ENCODE measurements at regions of chr9 and their contacts with region 1.

Region 1: DNA sequence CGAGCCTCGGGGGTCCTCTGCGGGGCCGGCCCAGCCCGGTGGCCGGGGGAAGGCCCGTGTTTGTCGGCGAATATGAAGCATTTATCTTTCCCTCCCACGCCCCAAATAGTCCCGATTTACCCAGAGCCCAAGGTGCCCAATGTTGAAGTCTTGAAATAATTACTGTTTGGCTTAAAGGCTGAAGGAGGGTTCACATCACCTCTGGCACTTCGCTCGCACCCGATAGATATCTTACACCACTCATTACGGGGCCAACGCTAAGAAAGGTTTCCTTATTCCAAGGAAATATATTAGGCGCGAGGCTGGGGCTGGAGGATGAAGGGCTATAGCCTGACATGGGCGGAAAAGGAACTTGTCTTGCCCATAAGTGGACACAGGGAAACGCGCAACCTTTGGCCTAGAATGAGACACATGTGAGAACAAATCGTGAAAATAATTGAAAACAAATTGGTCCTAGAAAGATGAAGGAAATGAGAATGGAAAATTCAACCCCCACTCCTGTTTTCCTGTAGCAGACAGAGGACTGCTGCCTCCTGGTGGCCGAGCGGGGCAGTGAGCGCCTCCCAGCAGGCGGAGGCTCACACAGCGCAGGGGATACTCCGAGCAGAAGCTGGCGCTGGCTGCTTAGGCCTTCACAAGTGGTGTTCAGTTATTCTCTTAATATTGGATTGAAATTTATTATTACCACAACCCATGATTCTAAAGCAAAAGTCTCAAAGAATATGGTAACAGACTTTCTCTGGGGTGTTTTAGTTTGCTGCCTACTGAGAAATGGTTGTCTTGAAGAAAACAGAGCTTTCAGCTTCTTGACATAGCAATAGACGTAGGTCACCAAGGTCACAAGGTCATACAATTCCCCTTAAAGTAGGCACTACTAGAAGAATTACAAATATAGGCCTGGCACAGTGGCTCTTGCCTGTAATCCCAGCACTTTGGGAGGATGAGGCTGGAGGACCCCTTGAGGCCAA is 7.9 kb downstream of the CCL21 start:
- DNase-seq: peak; percentile 70 to 88 (median 78)
- ATAC-seq: peak; percentile 82
- H3K4me3 ChIP-seq: peak overlapping the region; percentile 54
- H3K4me3 Mint-ChIP-seq: peak overlapping the region; percentile 87
- H3K27ac ChIP-seq: no peak overlapping the region
- H3K27ac Mint-ChIP-seq: no peak overlapping the region
- H3K4me1 ChIP-seq: peaks cover 12% of the 10 kb centered on the region
- H3K4me1 Mint-ChIP-seq: peaks cover 14% of the 10 kb centered on the region
- H3K27me3 ChIP-seq: no peaks in the 10 kb centered on the region
- H3K27me3 Mint-ChIP-seq: peaks cover 8% of the 10 kb centered on the region
- CTCF ChIP-seq: peak; percentile 85

Region 2: GRCh38 chr9:34611829-34612630 is 90.0 kb before region 1 on chr9 and contains the start of gene RPP25L:
- CTCF ChIA-PET with region 1: interaction called, 8 read pairs
- POLR2A ChIA-PET with region 1: no interaction called
- intact Hi-C with region 1: loop called (anchors 1 to 2 kb)
- DNase-seq: peak; percentile 64 to 94 (median 82)
- ATAC-seq: peak; percentile 91
- H3K4me3 ChIP-seq: peak within 1 kb of the TSS; percentile 95
- H3K4me3 Mint-ChIP-seq: peak within 1 kb of the TSS; percentile 84
- H3K27ac ChIP-seq: peak within 1 kb of the TSS; percentile 79 to 83
- H3K27ac Mint-ChIP-seq: peak within 1 kb of the TSS; percentile 40
- H3K4me1 ChIP-seq: peaks cover 28% of the 10 kb centered on the region
- H3K4me1 Mint-ChIP-seq: peaks cover 24% of the 10 kb centered on the region
- H3K27me3 ChIP-seq: no peaks in the 10 kb centered on the region
- H3K27me3 Mint-ChIP-seq: no peaks in the 10 kb centered on the region
- CTCF ChIP-seq: no peak
- total RNA-seq, gene RPP25L: 4.6 to 5.7 TPM

Region 3: DNA sequence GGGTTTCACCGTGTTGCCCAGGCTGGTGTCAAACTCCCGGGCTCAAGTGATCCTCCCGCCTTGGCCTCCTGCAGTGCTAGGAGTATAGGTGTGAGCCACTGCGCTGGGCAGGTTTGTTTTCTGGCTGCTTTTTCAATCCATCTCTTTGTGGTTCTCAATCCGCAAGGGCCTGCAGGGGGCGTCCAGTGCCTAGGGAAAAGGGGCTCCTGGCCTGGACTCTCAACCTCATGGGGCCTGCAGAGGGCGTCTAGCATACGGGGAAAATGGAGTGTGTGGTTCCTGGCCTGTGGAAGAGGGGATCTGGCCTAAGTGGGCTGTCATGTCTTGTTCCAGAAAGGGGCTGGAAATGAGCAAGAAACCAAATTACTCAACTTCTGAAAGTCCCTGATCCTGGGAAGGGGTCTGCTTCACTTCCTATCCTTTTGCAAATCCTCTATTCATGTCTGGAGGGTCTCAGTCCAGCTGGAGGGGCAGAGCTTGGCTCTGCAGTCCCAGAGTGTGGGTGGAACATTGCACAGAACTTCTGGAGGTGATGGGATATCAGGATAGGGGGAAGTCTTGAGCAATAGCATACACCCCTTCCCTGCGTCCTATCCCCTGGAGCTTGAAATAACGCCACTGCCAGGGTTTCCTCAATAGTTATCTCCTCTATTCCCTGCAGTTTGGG is 26.9 kb before region 1 on chr9:
- CTCF ChIA-PET with region 1: no interaction called
- POLR2A ChIA-PET with region 1: no interaction called
- intact Hi-C with region 1: loop called in 1 of 2 experiments (anchors 2 kb)
- DNase-seq: peak in 12 of 14 experiments; percentile 14 to 75 (median 52)
- ATAC-seq: peak; percentile 62
- H3K4me3 ChIP-seq: no peak overlapping the region
- H3K4me3 Mint-ChIP-seq: no peak overlapping the region
- H3K27ac ChIP-seq: no peak overlapping the region
- H3K27ac Mint-ChIP-seq: no peak overlapping the region
- H3K4me1 ChIP-seq: no peaks in the 10 kb centered on the region
- H3K4me1 Mint-ChIP-seq: no peaks in the 10 kb centered on the region
- H3K27me3 ChIP-seq: no peaks in the 10 kb centered on the region
- H3K27me3 Mint-ChIP-seq: no peaks in the 10 kb centered on the region
- CTCF ChIP-seq: peak; percentile 53

Measured in CD4-positive, alpha-beta T cell (primary cell).